A549 (cell line): ENCODE measurements at regions of chr10 and their contacts with region 1.

Region 1: GRCh38 chr10:110547139-110547761 is 20.2 kb upstream of the SMC3 start:
- DNase-seq: peak; percentile 69
- ATAC-seq: peak; percentile 70 to 87; a peak in 5 of 6 replicates
- H3K4me3 ChIP-seq: no peak overlapping the region
- H3K27ac ChIP-seq: peak overlapping the region; percentile 64 to 74
- H3K4me1 ChIP-seq: peaks cover 10% of the 10 kb centered on the region
- CTCF ChIP-seq: peak; percentile 89
- EP300 ChIP-seq: no peak
- POLR2A ChIP-seq: no peak
- RAD21 ChIP-seq: peak; percentile 92 to 93

Region 2: GRCh38 chr10:110304780-110305421 is 242.3 kb before region 1 on chr10 and contains the start of gene SMNDC1:
- CTCF ChIA-PET with region 1: interaction called, 65 read pairs
- POLR2A ChIA-PET with region 1: no interaction called
- DNase-seq: peak; percentile 86 to 99
- ATAC-seq: peak; percentile 91 to 95
- H3K4me3 ChIP-seq: peak within 1 kb of the TSS; percentile 93
- H3K27ac ChIP-seq: peak within 1 kb of the TSS; percentile 97 to 98
- H3K4me1 ChIP-seq: peaks cover 57% of the 10 kb centered on the region
- CTCF ChIP-seq: no peak
- EP300 ChIP-seq: no peak
- POLR2A ChIP-seq: peak; percentile 28; the same call in 1 of the 2 replicates
- RAD21 ChIP-seq: no peak; a peak in 1 of 5 replicates
- polyA plus RNA-seq, gene SMNDC1: 35.4 and 40.2 TPM in 2 replicates

Region 3: DNA sequence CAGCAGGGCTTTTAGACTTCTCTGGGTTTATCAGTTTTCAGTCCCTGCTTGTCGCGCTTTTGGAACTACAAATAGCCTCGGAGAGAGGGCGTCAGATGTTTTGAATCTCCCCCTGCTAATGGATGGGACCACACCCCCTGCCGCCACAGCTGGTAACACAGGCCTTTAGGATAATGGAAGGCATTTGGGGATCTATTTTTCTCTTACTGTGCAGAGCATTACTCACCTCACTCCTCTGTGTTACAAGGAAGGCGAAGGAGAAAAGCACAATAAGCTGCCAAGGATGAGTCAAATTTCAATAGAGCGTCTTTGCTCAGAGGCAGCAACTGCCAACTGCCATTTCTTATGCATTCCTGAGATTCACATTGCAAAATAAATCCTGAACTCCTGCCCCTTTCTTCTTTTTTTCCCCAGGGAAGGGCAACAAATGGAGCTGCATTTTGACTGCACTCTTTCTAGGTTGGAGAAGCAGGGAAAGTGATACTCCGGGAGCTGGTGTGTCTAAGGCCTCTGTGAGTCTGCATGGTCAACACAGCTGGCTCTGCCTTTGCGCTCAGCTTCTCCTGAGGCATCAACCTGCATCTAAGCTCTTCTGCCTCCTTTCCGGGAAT is 211.0 kb before region 1 on chr10:
- CTCF ChIA-PET with region 1: interaction called, 18 read pairs
- POLR2A ChIA-PET with region 1: no interaction called
- DNase-seq: peak; percentile 73 to 78
- ATAC-seq: peak; percentile 96 to 98
- H3K4me3 ChIP-seq: no peak overlapping the region
- H3K27ac ChIP-seq: peak overlapping the region; percentile 72 to 86
- H3K4me1 ChIP-seq: peaks cover 34% of the 10 kb centered on the region
- CTCF ChIP-seq: no peak
- EP300 ChIP-seq: no peak
- POLR2A ChIP-seq: no peak
- RAD21 ChIP-seq: no peak; a peak in 2 of 5 replicates

Region 4: GRCh38 chr10:110502851-110503301 is 44.4 kb before region 1 on chr10:
- CTCF ChIA-PET with region 1: interaction called, 17 read pairs
- POLR2A ChIA-PET with region 1: no interaction called
- DNase-seq: peak in 1 of 2 experiments; percentile 40
- ATAC-seq: no peak
- H3K4me3 ChIP-seq: peak overlapping the region; percentile 86
- H3K27ac ChIP-seq: peak overlapping the region; percentile 96
- H3K4me1 ChIP-seq: peaks cover 68% of the 10 kb centered on the region
- CTCF ChIP-seq: no peak
- EP300 ChIP-seq: no peak
- POLR2A ChIP-seq: no peak
- RAD21 ChIP-seq: no peak

Region 5: GRCh38 chr10:110530131-110530831 is 17.0 kb before region 1 on chr10:
- CTCF ChIA-PET with region 1: interaction called, 17 read pairs
- POLR2A ChIA-PET with region 1: no interaction called
- DNase-seq: peak; percentile 88 to 91
- ATAC-seq: peak; percentile 68 to 80
- H3K4me3 ChIP-seq: peak overlapping the region; percentile 37
- H3K27ac ChIP-seq: peak overlapping the region; percentile 92 to 93
- H3K4me1 ChIP-seq: peaks cover 68% of the 10 kb centered on the region
- CTCF ChIP-seq: no peak
- EP300 ChIP-seq: peak; percentile 80 to 95; a peak in 3 of 5 replicates
- POLR2A ChIP-seq: peak; percentile 39
- RAD21 ChIP-seq: peak in 1 of 2 experiments; percentile 47; a peak in 2 of 5 replicates

Region 6: GRCh38 chr10:110600487-110601101 is 53.3 kb after region 1 on chr10:
- CTCF ChIA-PET with region 1: interaction called, 15 read pairs
- POLR2A ChIA-PET with region 1: no interaction called
- DNase-seq: peak; percentile 27 to 82
- ATAC-seq: peak; percentile 71 to 91; a peak in 5 of 6 replicates
- H3K4me3 ChIP-seq: no peak overlapping the region
- H3K27ac ChIP-seq: peak overlapping the region in 1 of 2 experiments; percentile 22; a peak in 1 of 6 replicates
- H3K4me1 ChIP-seq: peaks cover 3% of the 10 kb centered on the region; the same call in 1 of the 3 replicates
- CTCF ChIP-seq: peak; percentile 82
- EP300 ChIP-seq: no peak
- POLR2A ChIP-seq: no peak
- RAD21 ChIP-seq: peak; percentile 65